IMR-90 (cell line): ENCODE measurements at regions of chr21 and their contacts with region 1.

Region 1: DNA sequence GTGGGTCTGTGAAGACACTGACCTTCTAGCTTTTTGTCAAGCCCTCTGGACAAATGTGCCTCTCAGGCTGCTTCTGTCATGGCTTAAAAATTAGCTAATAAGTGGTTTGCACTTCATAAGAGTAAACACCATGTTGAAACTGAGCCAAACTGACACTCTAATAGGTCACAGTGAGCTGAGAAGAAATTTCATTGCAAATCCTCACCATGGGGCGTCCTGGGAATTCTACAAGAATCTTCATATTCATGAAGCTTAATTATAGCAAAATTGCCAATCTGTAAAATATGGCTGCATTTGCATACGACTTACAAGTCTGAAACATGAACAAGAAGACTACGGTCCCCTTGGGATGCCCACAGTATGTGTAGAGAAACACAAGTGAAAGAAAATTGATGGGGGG is 188.6 kb downstream of the DSCAM start:
- DNase-seq: no peak
- ATAC-seq: no peak
- H3K4me3 ChIP-seq: no peak overlapping the region
- H3K27ac ChIP-seq: no peak overlapping the region
- H3K4me1 ChIP-seq: no peaks in the 10 kb centered on the region
- H3K27me3 ChIP-seq: no peaks in the 10 kb centered on the region
- CTCF ChIP-seq: no peak
- POLR2A ChIP-seq: no peak
- RAD21 ChIP-seq: no peak

Region 2: DNA sequence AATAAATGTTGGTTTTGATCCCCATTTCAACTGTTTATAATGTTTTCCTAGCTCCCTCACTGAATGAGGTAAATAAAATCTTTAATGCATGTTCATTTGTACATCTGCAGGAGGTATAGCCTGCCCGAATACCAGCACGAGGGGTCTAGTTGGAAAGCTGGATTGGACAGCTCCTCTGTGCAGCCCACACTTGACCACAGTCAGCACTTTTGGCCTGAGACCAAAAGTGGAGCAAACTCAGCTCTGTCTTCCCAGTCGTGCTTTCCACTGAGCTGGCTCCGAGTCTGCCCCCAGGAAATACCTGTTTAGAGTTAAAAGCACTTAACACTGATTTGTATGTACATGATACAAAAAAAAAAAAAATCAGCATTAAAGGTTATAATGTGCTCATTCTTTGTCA is 35.8 kb before region 1 on chr21:
- CTCF ChIA-PET with region 1: no interaction called
- POLR2A ChIA-PET with region 1: no interaction called
- dilution Hi-C with region 1: no loop called
- in situ Hi-C with region 1: no loop called
- intact Hi-C with region 1: no loop called
- DNase-seq: no peak
- ATAC-seq: no peak
- H3K4me3 ChIP-seq: no peak overlapping the region
- H3K27ac ChIP-seq: no peak overlapping the region
- H3K4me1 ChIP-seq: no peaks in the 10 kb centered on the region
- H3K27me3 ChIP-seq: no peaks in the 10 kb centered on the region
- CTCF ChIP-seq: no peak
- POLR2A ChIP-seq: no peak
- RAD21 ChIP-seq: no peak

Region 3: GRCh38 chr21:40765811-40766210 is 107.5 kb after region 1 on chr21:
- CTCF ChIA-PET with region 1: no interaction called
- POLR2A ChIA-PET with region 1: no interaction called
- dilution Hi-C with region 1: no loop called
- in situ Hi-C with region 1: loop called (anchors 25 kb)
- intact Hi-C with region 1: no loop called
- DNase-seq: no peak
- ATAC-seq: no peak
- H3K4me3 ChIP-seq: no peak overlapping the region
- H3K27ac ChIP-seq: no peak overlapping the region
- H3K4me1 ChIP-seq: no peaks in the 10 kb centered on the region
- H3K27me3 ChIP-seq: no peaks in the 10 kb centered on the region
- CTCF ChIP-seq: no peak
- POLR2A ChIP-seq: no peak
- RAD21 ChIP-seq: no peak